ENCODE measurements at regions of chr6 and their contacts with region 1.

Region 1: DNA sequence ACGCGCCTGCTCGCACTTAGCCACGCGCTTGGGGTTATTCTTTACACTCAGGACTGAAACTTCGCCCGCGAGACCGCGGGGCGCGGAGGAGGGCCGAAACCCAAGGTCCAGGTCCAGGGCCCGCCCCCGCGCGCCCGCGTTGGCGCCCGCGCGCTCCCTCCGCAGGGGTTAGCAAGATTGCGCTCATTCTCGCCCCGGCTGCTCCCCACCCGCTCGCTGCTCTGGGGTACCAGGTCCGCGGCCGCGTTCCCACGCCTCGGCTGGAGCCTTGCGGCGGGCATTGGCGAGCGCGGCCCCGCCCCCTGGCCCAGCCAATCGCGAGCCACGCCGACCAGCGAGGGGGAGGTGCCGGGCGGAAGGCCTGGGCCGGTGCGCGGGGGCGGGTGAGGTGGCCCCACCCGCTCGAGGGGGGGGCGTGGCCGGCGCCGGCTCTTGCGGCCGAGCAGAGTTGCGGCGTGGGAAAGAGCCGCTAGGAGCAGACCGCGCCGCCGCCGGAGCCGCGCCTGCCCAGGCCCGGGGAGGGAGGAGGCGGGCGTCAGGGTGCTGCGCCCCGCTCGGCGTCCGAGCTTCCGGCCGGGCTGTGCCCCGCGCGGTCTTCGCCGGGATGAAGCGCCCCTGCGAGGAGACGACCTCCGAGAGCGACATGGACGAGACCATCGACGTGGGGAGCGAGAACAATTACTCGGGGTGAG is at the start of gene HEY2:
- DNase-seq: peak; percentile 69 to 79 (median 75)
- H3K4me3 ChIP-seq: peak within 1 kb of the TSS; percentile 30 to 56
- H3K4me3 Mint-ChIP-seq: peak within 1 kb of the TSS; percentile 88 to 95 (median 91)
- H3K27ac ChIP-seq: no peak within 1 kb of the TSS
- H3K27ac Mint-ChIP-seq: peak within 1 kb of the TSS; percentile 57 to 92 (median 80)
- H3K4me1 ChIP-seq: peaks cover 41% of the 10 kb centered on the region
- H3K4me1 Mint-ChIP-seq: peaks cover 21 to 43% (median 27%) of the 10 kb centered on the region in 4 donors
- H3K27me3 ChIP-seq: peaks cover 57% of the 10 kb centered on the region
- H3K27me3 Mint-ChIP-seq: peaks cover 41 to 42% of the 10 kb centered on the region in 2 donors
- total RNA-seq, gene HEY2: 0.14 TPM in 1 of 2 experiments, not detected in the other

Region 2: DNA sequence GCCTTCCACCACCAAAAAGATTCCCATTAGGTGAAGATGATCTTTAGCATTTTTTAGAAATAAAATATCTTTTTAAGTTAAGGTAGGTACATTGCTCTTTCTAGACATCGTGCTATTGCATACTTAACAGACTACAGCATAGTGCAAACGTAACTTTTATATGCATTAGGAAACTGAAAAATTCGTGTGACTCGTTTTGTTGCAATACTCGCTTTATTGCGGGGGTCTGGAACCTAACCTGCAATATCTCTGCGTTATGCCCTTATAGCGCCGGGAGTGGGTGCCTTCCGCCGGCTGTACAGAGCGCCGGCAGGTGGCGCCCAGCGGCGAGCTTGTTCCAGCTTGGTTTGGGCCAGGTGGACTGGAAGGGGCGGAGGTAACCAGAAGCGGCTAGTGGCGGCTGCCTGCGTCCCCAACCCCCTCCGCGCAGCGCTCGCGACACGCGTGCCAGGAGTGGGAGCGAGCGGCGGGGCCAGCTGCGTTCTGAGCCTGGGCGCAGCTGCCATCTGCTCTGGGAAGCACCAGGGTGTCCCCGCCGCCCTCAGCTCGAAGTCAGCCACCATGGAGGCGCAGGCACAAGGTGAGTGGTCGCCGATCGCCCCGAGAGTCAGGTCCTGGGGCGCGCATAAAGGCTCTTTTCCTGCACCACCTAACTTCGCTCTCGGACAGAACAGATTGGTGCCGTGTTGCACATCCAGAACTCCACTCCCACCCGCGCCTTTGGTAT is 595.8 kb before region 1 on chr6 and contains the start of gene TPD52L1:
- CTCF ChIA-PET with region 1: interaction called, 3 read pairs
- POLR2A ChIA-PET with region 1: no interaction called
- intact Hi-C with region 1: loop called (anchors 1 kb)
- DNase-seq: peak; percentile 37 to 52 (median 44)
- H3K4me3 ChIP-seq: peak within 1 kb of the TSS; percentile 29 to 44
- H3K4me3 Mint-ChIP-seq: peak within 1 kb of the TSS; percentile 74 to 88 (median 83)
- H3K27ac ChIP-seq: no peak within 1 kb of the TSS
- H3K27ac Mint-ChIP-seq: peak within 1 kb of the TSS in 1 of 7 donors; percentile 61
- H3K4me1 ChIP-seq: peaks cover 11% of the 10 kb centered on the region
- H3K4me1 Mint-ChIP-seq: peaks cover 0 to 9% (median 7%) of the 10 kb centered on the region in 4 donors
- H3K27me3 ChIP-seq: peaks cover 3% of the 10 kb centered on the region
- H3K27me3 Mint-ChIP-seq: peaks cover 15 to 28% of the 10 kb centered on the region in 2 donors
- total RNA-seq, gene TPD52L1: 0.33 to 0.35 TPM

Region 3: DNA sequence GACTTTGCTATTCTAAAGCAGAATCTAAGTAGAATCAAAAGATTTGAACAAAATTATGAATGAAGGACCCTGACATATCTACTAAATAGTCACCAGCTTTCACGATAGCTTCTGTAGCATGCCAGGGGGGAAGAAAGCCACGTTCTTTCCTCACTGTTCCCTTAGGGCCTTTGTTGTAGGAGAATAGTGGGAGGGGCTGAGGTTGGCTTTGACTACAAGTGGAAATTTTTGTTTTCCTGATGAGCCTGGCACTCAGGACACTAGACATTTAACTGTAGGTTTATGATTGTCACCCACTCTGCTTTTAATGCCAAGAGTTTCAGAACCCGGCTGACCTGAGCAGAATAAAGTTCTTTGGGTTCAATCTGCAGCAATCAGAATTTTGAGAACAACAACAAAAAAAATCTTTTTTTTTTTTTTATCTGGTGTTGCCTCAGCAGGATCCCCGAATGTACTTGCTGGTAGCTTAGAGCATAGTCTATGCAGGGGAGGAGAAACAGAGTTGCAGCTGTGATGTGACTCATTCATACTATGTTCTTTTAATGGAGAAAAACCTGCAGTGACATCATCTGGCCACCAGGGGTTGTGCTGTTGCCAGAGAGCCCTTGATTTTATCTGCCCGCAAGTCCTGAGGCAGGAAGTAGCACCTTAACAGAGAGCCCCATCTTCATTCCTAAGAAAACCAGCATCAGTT is 557.3 kb before region 1 on chr6:
- CTCF ChIA-PET with region 1: interaction called, 5 read pairs
- POLR2A ChIA-PET with region 1: no interaction called
- intact Hi-C with region 1: loop called (anchors 2 kb)
- DNase-seq: peak; percentile 41 to 59 (median 45)
- H3K4me3 ChIP-seq: no peak overlapping the region
- H3K4me3 Mint-ChIP-seq: no peak overlapping the region
- H3K27ac ChIP-seq: no peak overlapping the region
- H3K27ac Mint-ChIP-seq: no peak overlapping the region
- H3K4me1 ChIP-seq: no peaks in the 10 kb centered on the region
- H3K4me1 Mint-ChIP-seq: peaks cover 0 to 3% (median 1%) of the 10 kb centered on the region in 4 donors
- H3K27me3 ChIP-seq: no peaks in the 10 kb centered on the region
- H3K27me3 Mint-ChIP-seq: peaks cover 3 to 4% of the 10 kb centered on the region in 2 donors

Region 4: DNA sequence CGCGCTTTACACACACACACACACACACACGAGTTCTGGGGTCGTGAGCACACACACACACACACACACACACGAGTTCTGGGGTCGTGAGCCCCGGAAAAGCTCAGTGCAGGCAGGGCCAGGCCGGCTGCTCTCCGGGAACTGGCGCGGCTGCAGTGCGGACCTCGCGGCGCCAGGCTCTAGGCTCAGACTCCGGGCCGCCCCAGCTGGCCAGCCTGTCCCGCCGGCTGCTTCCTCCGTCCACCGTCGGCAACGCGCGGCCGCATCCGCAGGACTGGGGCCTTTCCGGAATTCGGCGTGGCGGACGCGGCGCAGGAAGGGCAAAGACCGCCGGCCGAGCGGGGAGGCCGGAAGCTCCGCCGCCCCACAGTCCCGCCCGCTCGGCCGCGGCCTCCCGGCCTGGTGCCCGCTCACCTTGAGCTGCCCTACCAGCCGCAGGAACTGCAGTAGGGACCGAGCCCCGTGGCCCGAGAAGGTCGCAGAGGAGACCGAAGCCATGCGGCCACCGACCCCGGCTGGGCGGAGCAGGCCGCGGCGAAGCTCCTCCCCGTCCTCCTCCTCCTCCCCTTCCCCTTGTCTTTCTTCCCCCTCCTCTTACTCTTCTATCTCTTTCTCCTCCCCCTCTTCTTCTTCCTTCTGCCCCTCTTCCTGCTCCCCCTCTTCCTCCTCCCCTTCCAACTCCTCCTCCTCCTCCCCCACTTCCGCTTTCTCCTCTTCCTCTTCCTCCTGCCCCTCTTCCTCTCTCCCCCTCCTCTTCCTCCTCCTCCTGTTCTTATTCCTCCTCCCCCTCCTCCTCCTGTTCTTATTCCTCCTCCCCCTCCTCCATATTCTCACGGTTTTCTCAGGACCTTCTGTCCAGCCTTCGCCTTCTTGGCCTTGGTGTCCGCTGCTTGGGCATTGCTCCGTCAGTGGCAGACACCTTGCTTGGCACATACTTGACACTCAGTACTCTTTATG is 447.6 kb before region 1 on chr6 and contains the start of gene HDDC2:
- CTCF ChIA-PET with region 1: interaction called, 16 read pairs
- POLR2A ChIA-PET with region 1: interaction called, 5 read pairs
- intact Hi-C with region 1: no loop called
- DNase-seq: peak in 4 of 5 donors; percentile 32 to 43 (median 37)
- H3K4me3 ChIP-seq: peak within 1 kb of the TSS; percentile 44 to 62
- H3K4me3 Mint-ChIP-seq: peak within 1 kb of the TSS; percentile 82 to 97 (median 92)
- H3K27ac ChIP-seq: peak within 1 kb of the TSS; percentile 62
- H3K27ac Mint-ChIP-seq: peak within 1 kb of the TSS; percentile 78 to 97 (median 94)
- H3K4me1 ChIP-seq: peaks cover 47% of the 10 kb centered on the region
- H3K4me1 Mint-ChIP-seq: peaks cover 44 to 59% (median 54%) of the 10 kb centered on the region in 4 donors
- H3K27me3 ChIP-seq: no peaks in the 10 kb centered on the region
- H3K27me3 Mint-ChIP-seq: no peaks in the 10 kb centered on the region
- total RNA-seq, gene HDDC2: 49.5 to 53.5 TPM

Region 5: GRCh38 chr6:125512621-125513020 is 236.7 kb before region 1 on chr6:
- CTCF ChIA-PET with region 1: no interaction called
- POLR2A ChIA-PET with region 1: no interaction called
- intact Hi-C with region 1: loop called (anchors 2 kb)
- DNase-seq: no peak
- H3K4me3 ChIP-seq: no peak overlapping the region
- H3K4me3 Mint-ChIP-seq: no peak overlapping the region
- H3K27ac ChIP-seq: no peak overlapping the region
- H3K27ac Mint-ChIP-seq: no peak overlapping the region
- H3K4me1 ChIP-seq: no peaks in the 10 kb centered on the region
- H3K4me1 Mint-ChIP-seq: no peaks in the 10 kb centered on the region
- H3K27me3 ChIP-seq: no peaks in the 10 kb centered on the region
- H3K27me3 Mint-ChIP-seq: peaks cover 4 to 6% of the 10 kb centered on the region in 2 donors

Region 6: DNA sequence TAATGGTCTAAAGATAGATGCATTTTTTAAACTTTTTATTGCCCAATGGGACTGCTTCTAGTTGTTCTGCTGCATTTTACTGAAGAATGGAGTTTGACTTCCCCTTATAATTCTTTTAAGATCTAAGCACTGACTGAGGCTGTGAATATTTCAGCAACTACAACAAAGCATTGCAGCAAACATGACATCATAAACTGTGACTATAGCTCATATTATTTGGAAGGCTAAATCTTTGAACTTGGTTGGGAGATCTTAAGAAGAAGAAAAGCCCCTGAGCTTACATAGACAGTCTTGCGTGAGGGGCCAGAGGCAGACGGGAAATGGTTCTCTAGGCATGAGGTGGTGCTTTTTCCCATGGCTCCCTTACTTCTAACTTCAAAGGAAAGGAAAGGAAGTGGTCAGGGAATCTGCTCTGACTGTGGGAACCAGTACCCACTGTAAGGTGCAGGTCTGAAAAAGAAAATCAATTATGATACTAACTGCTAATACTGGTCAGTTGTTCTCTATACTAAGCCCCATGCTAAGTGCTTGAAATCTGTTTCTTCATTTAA is 14.9 kb after region 1 on chr6:
- CTCF ChIA-PET with region 1: interaction called, 17 read pairs
- POLR2A ChIA-PET with region 1: interaction called, 3 read pairs
- intact Hi-C with region 1: no loop called
- DNase-seq: no peak
- H3K4me3 ChIP-seq: no peak overlapping the region
- H3K4me3 Mint-ChIP-seq: no peak overlapping the region
- H3K27ac ChIP-seq: no peak overlapping the region
- H3K27ac Mint-ChIP-seq: no peak overlapping the region
- H3K4me1 ChIP-seq: no peaks in the 10 kb centered on the region
- H3K4me1 Mint-ChIP-seq: peaks cover 0 to 5% (median 0%) of the 10 kb centered on the region in 4 donors
- H3K27me3 ChIP-seq: peaks cover 4% of the 10 kb centered on the region
- H3K27me3 Mint-ChIP-seq: peaks cover 36 to 45% of the 10 kb centered on the region in 2 donors

Measured in CD4-positive, alpha-beta memory T cell (primary cell).